ENCODE measurements at regions of chr15 and their contacts with region 1.

Region 1: GRCh38 chr15:65304389-65305144 is at the start of gene RNU5B-1:
- DNase-seq: peak; percentile 85 to 96
- H3K4me3 ChIP-seq: peak within 1 kb of the TSS; percentile 57
- H3K27ac ChIP-seq: peak within 1 kb of the TSS; percentile 95
- H3K4me1 ChIP-seq: peaks cover 9% of the 10 kb centered on the region; the same call in 1 of the 2 replicates
- H3K27me3 ChIP-seq: no peaks in the 10 kb centered on the region
- CTCF ChIP-seq: no peak; the same call in 1 of the 2 replicates
- total RNA-seq, gene RNU5B-1: not detected in 2 replicates

Region 2: GRCh38 chr15:64921711-64922110 is 382.9 kb before region 1 on chr15:
- CTCF ChIA-PET with region 1: no interaction called
- POLR2A ChIA-PET with region 1: no interaction called
- intact Hi-C with region 1: no loop called
- DNase-seq: peak; percentile 66 to 87
- H3K4me3 ChIP-seq: peak overlapping the region; percentile 41; the same call in 1 of the 2 replicates
- H3K27ac ChIP-seq: peak overlapping the region; percentile 71
- H3K4me1 ChIP-seq: peaks cover 21% of the 10 kb centered on the region
- H3K27me3 ChIP-seq: no peaks in the 10 kb centered on the region
- CTCF ChIP-seq: no peak

Region 3: DNA sequence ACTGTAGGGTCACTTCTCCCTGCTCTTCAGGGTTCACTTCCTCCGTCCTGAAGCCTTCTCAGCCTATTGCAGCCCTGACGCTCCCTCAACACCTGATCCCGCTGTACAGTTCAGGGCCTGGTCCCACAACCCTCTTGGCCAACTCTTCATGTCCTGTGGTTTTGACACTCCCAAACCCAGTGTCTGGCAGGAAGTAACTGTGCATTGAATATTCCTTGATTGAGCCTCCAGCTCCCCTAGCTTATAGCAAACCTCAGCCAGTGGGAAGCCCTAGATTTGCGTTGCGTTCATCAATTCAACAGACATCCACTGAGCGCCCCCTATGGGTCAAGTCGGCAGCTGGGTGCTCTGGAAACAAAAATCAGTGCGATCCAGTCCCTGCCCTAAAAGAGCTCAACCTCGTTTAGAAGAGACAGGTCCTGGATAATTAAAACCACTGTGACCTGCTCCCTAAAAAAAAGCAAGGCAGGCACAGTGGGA is 203.1 kb before region 1 on chr15:
- CTCF ChIA-PET with region 1: no interaction called
- POLR2A ChIA-PET with region 1: interaction called, 11 read pairs
- intact Hi-C with region 1: no loop called
- DNase-seq: peak in 1 of 2 experiments; percentile 49
- H3K4me3 ChIP-seq: no peak overlapping the region
- H3K27ac ChIP-seq: no peak overlapping the region
- H3K4me1 ChIP-seq: no peaks in the 10 kb centered on the region
- H3K27me3 ChIP-seq: no peaks in the 10 kb centered on the region
- CTCF ChIP-seq: peak; percentile 77

Region 4: DNA sequence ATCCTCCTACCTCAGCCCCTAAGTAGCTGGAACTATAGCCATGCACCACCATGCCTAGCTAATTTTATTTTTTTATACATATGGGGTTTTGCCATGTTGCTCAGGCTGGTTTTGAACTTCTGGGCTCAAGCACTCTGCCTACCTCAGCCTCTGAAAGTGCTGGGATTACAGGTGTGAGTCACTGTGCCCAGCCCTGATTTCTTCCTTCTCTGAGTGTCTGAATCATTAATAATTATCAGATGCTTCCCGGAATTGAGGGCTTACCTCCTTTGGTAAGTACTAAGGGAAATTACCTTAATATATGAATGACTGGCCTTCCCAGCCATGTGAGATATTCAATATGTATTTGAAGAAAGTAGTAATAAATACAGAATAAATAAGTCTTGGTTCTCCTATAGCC is 126.7 kb before region 1 on chr15:
- CTCF ChIA-PET with region 1: no interaction called
- POLR2A ChIA-PET with region 1: interaction called, 11 read pairs
- intact Hi-C with region 1: no loop called
- DNase-seq: peak in 1 of 2 experiments; percentile 45
- H3K4me3 ChIP-seq: no peak overlapping the region
- H3K27ac ChIP-seq: no peak overlapping the region
- H3K4me1 ChIP-seq: no peaks in the 10 kb centered on the region
- H3K27me3 ChIP-seq: no peaks in the 10 kb centered on the region
- CTCF ChIP-seq: no peak

Region 5: GRCh38 chr15:65286704-65287519 is 17.7 kb before region 1 on chr15 and contains the start of gene PARP16:
- CTCF ChIA-PET with region 1: no interaction called
- POLR2A ChIA-PET with region 1: interaction called, 18 read pairs
- intact Hi-C with region 1: no loop called
- DNase-seq: peak; percentile 65 to 94
- H3K4me3 ChIP-seq: peak within 1 kb of the TSS; percentile 74
- H3K27ac ChIP-seq: no peak within 1 kb of the TSS
- H3K4me1 ChIP-seq: peaks cover 14% of the 10 kb centered on the region
- H3K27me3 ChIP-seq: no peaks in the 10 kb centered on the region
- CTCF ChIP-seq: no peak
- total RNA-seq, gene PARP16: 12.3 TPM in 2 replicates

Region 6: DNA sequence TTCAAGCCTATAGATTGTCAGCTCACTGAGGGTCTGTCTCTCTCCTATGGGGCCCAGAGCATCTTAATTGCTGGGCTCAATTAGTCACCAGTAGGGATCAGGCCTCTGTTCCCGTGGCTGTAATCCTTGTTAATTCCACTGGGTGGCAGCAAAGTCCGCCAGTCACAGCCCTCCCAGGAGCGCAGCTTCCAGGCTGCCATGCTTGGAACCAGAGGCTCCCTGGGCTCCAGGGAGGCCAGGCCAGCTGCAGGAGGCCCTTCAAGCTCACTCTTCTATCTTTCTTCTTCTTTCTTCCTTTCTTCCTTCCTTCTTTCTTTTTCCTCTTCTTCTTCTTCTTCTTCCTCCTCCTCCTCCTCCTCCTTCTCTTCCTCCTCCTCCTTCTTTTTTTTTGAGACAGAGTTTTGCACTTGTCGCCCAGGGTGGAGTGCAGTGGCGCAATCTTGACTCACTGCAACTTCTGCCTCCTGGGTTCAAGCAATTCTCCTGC is 14.3 kb after region 1 on chr15:
- CTCF ChIA-PET with region 1: interaction called, 7 read pairs
- POLR2A ChIA-PET with region 1: interaction called, 10 read pairs
- intact Hi-C with region 1: no loop called
- DNase-seq: peak; percentile 49 to 80
- H3K4me3 ChIP-seq: no peak overlapping the region
- H3K27ac ChIP-seq: no peak overlapping the region
- H3K4me1 ChIP-seq: no peaks in the 10 kb centered on the region
- H3K27me3 ChIP-seq: no peaks in the 10 kb centered on the region
- CTCF ChIP-seq: peak; percentile 88

Region 7: GRCh38 chr15:65484876-65485275 is 180.3 kb after region 1 on chr15:
- CTCF ChIA-PET with region 1: no interaction called
- POLR2A ChIA-PET with region 1: no interaction called
- intact Hi-C with region 1: no loop called
- DNase-seq: no peak
- H3K4me3 ChIP-seq: no peak overlapping the region
- H3K27ac ChIP-seq: no peak overlapping the region
- H3K4me1 ChIP-seq: no peaks in the 10 kb centered on the region
- H3K27me3 ChIP-seq: no peaks in the 10 kb centered on the region
- CTCF ChIP-seq: no peak

Region 8: DNA sequence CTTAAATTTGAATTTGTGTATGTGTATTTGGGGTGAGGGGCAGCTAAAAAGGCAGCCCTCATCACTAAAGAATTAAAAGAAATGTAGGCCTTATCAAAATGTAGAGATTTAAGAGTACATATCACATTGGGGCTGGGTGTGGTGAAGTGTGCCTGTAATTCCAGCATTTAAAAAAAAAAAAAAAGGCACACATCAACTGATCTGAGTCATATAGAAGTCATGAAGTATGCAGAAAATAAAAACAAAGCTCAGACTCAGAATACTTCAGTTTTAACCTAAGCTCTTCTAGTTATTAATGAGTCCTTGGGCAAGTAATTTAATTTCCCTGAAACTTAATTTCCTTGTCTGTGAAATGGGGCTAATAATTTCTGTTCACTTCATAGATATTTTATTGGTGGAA is 348.8 kb after region 1 on chr15:
- CTCF ChIA-PET with region 1: no interaction called
- POLR2A ChIA-PET with region 1: no interaction called
- intact Hi-C with region 1: no loop called
- DNase-seq: peak in 1 of 2 experiments; percentile 39
- H3K4me3 ChIP-seq: no peak overlapping the region
- H3K27ac ChIP-seq: no peak overlapping the region
- H3K4me1 ChIP-seq: peaks cover 9% of the 10 kb centered on the region; the same call in 1 of the 2 replicates
- H3K27me3 ChIP-seq: no peaks in the 10 kb centered on the region
- CTCF ChIP-seq: no peak

Region 9: DNA sequence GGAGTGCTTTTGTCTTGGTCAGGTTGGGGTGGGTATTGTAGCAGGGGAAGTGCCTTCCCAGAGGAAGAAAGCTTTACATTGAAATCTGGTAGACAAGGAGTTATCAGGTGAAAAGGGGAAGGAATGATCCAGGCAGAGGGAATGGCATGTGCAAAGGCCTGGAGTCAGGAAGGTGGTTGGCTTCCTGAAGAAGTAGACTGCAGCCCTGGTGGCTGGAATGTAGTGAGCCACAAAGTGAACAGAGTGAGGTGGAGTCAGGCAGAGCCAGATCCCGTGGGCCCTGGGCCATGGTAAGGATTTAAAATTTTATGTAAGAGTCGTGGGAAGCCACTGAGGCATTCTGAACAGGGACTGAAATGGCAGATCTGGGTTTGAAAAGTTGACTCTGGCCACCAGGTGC is 623.0 kb after region 1 on chr15:
- CTCF ChIA-PET with region 1: no interaction called
- POLR2A ChIA-PET with region 1: no interaction called
- intact Hi-C with region 1: no loop called
- DNase-seq: no peak
- H3K4me3 ChIP-seq: no peak overlapping the region
- H3K27ac ChIP-seq: no peak overlapping the region
- H3K4me1 ChIP-seq: no peaks in the 10 kb centered on the region
- H3K27me3 ChIP-seq: no peaks in the 10 kb centered on the region
- CTCF ChIP-seq: 0 out of 2 replicates have a peak, but pooled peaks have one; percentile 39

Measured in PC-9 (cell line).